Spleen (tissue), 13 donors: ENCODE measurements at regions of chr15 and their contacts with region 1.

Region 1: GRCh38 chr15:51776952-51777574 is 25.7 kb downstream of the TMOD2 start:
- DNase-seq: no peak
- H3K4me3 ChIP-seq: no peak overlapping the region
- H3K27ac ChIP-seq: no peak overlapping the region
- H3K4me1 ChIP-seq: peaks cover 10 to 19% (median 12%) of the 10 kb centered on the region in 6 donors
- H3K27me3 ChIP-seq: no peaks in the 10 kb centered on the region
- CTCF ChIP-seq: peak in 10 of 11 experiments; percentile 34 to 85 (median 71)
- POLR2A ChIP-seq: no peak

Region 2: GRCh38 chr15:51561271-51561670 is 215.8 kb before region 1 on chr15:
- intact Hi-C with region 1: no loop called
- DNase-seq: no peak
- H3K4me3 ChIP-seq: no peak overlapping the region
- H3K27ac ChIP-seq: no peak overlapping the region
- H3K4me1 ChIP-seq: peaks cover 0 to 10% (median 0%) of the 10 kb centered on the region in 6 donors
- H3K27me3 ChIP-seq: no peaks in the 10 kb centered on the region
- CTCF ChIP-seq: no peak
- POLR2A ChIP-seq: no peak

Region 3: GRCh38 chr15:51649659-51650521 is 127.2 kb before region 1 on chr15:
- intact Hi-C with region 1: loop called (anchors 5 kb)
- DNase-seq: no peak
- H3K4me3 ChIP-seq: no peak overlapping the region
- H3K27ac ChIP-seq: no peak overlapping the region
- H3K4me1 ChIP-seq: peaks cover 0 to 15% (median 0%) of the 10 kb centered on the region in 6 donors
- H3K27me3 ChIP-seq: no peaks in the 10 kb centered on the region
- CTCF ChIP-seq: peak; percentile 53 to 90 (median 78)
- POLR2A ChIP-seq: no peak

Region 4: DNA sequence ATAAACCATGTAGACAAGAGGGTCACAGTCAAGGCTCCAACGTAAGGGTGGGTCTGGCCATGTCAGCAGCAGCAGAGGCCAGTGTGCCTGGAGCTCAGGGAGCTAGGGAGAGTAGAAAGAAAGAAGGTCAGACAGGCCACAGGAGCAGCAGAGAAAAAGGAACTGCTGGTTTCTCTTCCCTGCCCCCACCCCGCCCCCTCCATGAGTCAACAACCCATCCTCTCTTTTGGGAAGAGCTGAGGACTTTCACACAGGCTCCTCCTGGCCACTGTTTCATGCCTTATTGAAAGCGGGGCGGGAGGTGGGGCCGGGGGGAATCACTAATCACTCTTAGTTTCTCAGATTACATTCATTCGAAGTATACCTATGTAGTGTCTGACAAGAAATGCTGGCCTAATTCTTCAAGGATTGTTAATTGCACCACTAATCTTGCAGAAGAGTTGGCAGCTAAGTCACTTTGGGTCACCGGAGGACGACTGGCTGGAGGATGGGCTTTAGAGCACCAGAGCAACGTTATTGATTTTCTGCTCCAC is 104.8 kb before region 1 on chr15:
- intact Hi-C with region 1: no loop called
- DNase-seq: no peak
- H3K4me3 ChIP-seq: no peak overlapping the region
- H3K27ac ChIP-seq: no peak overlapping the region
- H3K4me1 ChIP-seq: peaks cover 0 to 8% (median 0%) of the 10 kb centered on the region in 6 donors
- H3K27me3 ChIP-seq: no peaks in the 10 kb centered on the region
- CTCF ChIP-seq: no peak
- POLR2A ChIP-seq: no peak

Region 5: DNA sequence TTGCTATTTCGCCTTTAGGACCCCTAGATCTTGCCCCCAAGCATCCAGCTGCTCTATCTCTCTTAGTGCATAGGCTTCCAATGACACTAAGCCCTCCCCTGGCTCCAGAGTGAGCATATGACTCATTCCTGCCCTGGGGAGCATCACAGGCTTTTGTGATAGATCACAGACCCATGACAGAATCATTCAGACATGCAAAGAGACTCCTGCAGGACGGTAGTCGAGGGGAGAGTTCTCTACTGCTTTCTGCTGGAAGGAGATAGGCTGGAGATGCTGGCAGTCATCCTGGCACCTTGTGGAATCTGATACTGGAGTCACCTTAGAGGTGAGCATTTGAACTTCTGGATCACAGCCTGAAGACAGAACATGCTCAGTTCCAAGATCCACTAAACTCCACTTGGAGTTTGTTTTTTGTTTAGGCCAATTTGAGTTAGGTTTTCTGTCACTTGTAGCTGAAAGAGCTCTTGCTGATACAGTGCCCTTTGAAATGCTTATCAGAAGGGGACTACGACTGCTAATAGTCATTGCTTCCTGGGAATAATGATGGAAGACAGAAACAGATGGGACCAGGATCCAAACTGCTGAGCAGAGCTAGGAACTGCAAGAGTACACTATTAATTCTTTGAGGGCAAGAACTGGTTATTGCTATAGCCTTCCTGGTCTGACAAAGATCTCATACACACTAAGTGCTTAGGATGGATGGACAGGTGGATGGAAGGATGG is 50.6 kb before region 1 on chr15:
- intact Hi-C with region 1: loop called (anchors 10 kb)
- DNase-seq: no peak
- H3K4me3 ChIP-seq: no peak overlapping the region
- H3K27ac ChIP-seq: peak overlapping the region in 2 of 8 donors; percentile 11 to 47
- H3K4me1 ChIP-seq: peaks cover 22 to 100% (median 63%) of the 10 kb centered on the region in 6 donors
- H3K27me3 ChIP-seq: no peaks in the 10 kb centered on the region
- CTCF ChIP-seq: no peak
- POLR2A ChIP-seq: no peak

Region 6: GRCh38 chr15:52071546-52071945 is 294.5 kb after region 1 on chr15:
- intact Hi-C with region 1: no loop called
- DNase-seq: no peak
- H3K4me3 ChIP-seq: no peak overlapping the region
- H3K27ac ChIP-seq: no peak overlapping the region
- H3K4me1 ChIP-seq: peaks cover 0 to 9% (median 0%) of the 10 kb centered on the region in 6 donors
- H3K27me3 ChIP-seq: no peaks in the 10 kb centered on the region
- CTCF ChIP-seq: no peak
- POLR2A ChIP-seq: no peak